IMR-90 (cell line): ENCODE measurements at regions of chr20 and their contacts with region 1.

Region 1: DNA sequence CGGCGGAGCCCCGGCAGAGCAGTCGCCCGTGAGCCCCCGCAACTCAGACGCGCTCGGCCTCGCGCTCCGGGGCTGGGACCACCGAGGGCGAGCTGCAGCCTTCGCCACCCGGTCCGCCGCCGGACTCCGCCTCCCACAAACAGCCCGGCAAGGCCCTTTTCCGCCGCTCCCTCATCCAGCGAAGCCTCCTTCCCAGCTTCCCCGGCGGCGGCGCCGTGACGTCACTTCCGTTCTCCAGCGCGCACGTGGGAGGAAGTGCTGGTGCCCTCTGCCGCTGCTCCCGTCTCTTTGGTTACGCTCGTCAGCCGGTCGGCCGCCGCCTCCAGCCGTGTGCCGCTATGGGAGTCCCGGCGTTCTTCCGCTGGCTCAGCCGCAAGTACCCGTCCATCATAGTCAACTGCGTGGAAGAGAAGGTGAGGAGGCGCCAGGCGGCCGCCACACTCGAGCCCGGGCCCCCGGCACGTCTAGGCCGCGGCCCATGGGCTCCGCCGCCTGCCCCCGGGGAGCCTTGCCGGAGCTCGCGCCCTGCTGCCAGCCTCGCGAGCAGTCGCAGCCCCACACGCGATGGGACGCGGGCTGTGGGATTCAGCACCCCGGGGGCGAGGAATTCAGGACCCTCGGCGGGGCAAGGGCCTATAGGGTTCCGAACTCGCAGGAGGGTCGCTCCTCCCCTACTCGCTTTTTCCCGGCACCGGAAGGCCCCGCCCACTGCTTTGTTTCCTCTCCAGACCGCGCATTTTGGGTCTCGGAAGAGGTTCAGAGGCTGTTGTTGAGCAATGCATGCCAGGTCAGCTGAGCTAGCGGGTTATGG is at the start of gene XRN2:
- DNase-seq: peak; percentile 93
- ATAC-seq: peak; percentile 91
- H3K4me3 ChIP-seq: peak within 1 kb of the TSS; percentile 81
- H3K27ac ChIP-seq: peak within 1 kb of the TSS; percentile 93
- H3K4me1 ChIP-seq: peaks cover 3% of the 10 kb centered on the region
- H3K27me3 ChIP-seq: no peaks in the 10 kb centered on the region
- CTCF ChIP-seq: 0 out of 2 replicates have a peak, but pooled peaks have one; percentile 21
- POLR2A ChIP-seq: peak; percentile 85
- RAD21 ChIP-seq: no peak
- total RNA-seq, gene XRN2: 70.8 and 99.2 TPM in 2 replicates

Region 2: GRCh38 chr20:21361266-21361665 is 58.0 kb after region 1 on chr20:
- CTCF ChIA-PET with region 1: no interaction called
- POLR2A ChIA-PET with region 1: no interaction called
- dilution Hi-C with region 1: no loop called
- in situ Hi-C with region 1: no loop called
- intact Hi-C with region 1: loop called (anchors 2 kb)
- DNase-seq: peak; percentile 80
- ATAC-seq: peak; percentile 88
- H3K4me3 ChIP-seq: no peak overlapping the region
- H3K27ac ChIP-seq: no peak overlapping the region
- H3K4me1 ChIP-seq: peaks cover 3% of the 10 kb centered on the region
- H3K27me3 ChIP-seq: no peaks in the 10 kb centered on the region
- CTCF ChIP-seq: no peak
- POLR2A ChIP-seq: no peak
- RAD21 ChIP-seq: no peak

Region 3: GRCh38 chr20:21387528-21387927 is 84.3 kb after region 1 on chr20:
- CTCF ChIA-PET with region 1: no interaction called
- POLR2A ChIA-PET with region 1: no interaction called
- dilution Hi-C with region 1: no loop called
- in situ Hi-C with region 1: no loop called
- intact Hi-C with region 1: loop called (anchors 5 kb)
- DNase-seq: no peak
- ATAC-seq: no peak
- H3K4me3 ChIP-seq: no peak overlapping the region
- H3K27ac ChIP-seq: no peak overlapping the region
- H3K4me1 ChIP-seq: peaks cover 2% of the 10 kb centered on the region; the same call in 1 of the 2 replicates
- H3K27me3 ChIP-seq: peaks cover 15% of the 10 kb centered on the region
- CTCF ChIP-seq: no peak
- POLR2A ChIP-seq: no peak
- RAD21 ChIP-seq: no peak

Region 4: DNA sequence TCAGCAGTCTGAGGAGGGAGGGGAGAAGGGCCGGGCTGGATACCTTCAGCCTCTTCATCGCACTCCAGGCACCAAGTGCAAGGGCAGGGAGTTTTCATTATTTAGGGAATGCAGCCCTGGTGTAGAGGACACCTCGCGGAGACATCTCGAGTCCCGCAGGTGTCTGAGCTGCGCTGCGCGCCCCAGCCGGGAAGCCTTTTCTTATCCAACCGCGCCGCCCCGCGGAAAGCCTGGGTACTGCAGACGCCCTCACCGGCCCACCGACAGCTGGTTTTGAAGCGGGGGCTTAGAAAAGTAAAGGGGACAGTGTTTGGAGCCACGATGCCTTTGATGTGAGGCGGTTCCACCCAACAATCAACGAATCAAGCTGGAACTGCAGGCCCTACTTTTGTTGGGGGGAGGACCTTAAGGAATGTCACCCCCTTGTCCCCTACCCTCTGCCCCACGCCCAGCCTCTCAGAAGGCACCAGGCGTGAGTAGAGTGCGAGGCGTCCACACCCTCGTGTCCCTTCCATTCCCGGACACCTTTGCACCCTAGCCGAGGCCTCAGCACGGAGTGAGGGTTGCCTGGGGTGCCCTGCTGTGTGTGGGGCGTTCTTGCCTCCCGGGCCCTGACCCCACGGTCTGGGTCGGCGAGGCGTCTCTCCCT is 202.0 kb after region 1 on chr20:
- CTCF ChIA-PET with region 1: no interaction called
- POLR2A ChIA-PET with region 1: no interaction called
- dilution Hi-C with region 1: no loop called
- in situ Hi-C with region 1: no loop called
- intact Hi-C with region 1: loop called (anchors 2 kb)
- DNase-seq: peak; percentile 22
- ATAC-seq: peak; percentile 84
- H3K4me3 ChIP-seq: no peak overlapping the region
- H3K27ac ChIP-seq: no peak overlapping the region
- H3K4me1 ChIP-seq: no peaks in the 10 kb centered on the region; the same call in 1 of the 2 replicates
- H3K27me3 ChIP-seq: peaks cover 61% of the 10 kb centered on the region
- CTCF ChIP-seq: peak; percentile 96
- POLR2A ChIP-seq: peak; percentile 39; the same call in 1 of the 2 replicates
- RAD21 ChIP-seq: peak; percentile 96